RWPE1 (cell line): ENCODE measurements at regions of chr2 and their contacts with region 1.

Region 1: DNA sequence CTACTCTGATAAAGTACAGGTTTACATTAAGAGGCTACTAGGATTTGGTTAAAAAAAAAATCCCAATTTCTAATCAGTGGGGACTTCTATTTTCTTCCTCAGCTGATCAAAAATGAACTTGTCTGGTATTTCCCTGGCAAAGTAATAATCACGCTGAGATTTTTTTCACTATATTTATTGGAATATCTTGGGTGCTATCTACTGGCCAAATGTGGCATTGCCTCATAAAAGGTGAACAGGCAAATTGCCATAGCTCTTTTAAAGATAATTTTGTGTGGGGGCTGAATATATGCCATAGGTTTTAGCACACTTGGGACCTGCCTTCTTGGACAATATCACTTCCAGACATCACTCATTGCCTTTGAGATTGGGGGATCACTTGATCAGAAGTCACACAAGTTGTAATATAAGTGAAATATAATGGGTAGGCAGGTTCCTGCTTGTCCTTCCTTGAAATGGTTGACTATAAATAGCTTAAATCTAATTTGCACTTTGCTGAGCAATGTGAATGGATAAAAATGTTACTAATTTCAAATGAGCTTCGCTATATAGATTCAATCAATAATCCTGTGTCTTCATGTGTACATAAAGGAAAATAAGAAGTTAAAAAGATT is 7.0 kb upstream of the NXPH2 start:
- DNase-seq: peak; percentile 23
- H3K27ac ChIP-seq: no peak overlapping the region
- CTCF ChIP-seq: peak; percentile 80

Region 2: GRCh38 chr2:138658187-138658894 is 128.8 kb before region 1 on chr2:
- CTCF ChIA-PET with region 1: interaction called, 10 read pairs
- POLR2A ChIA-PET with region 1: no interaction called
- DNase-seq: no peak
- H3K27ac ChIP-seq: no peak overlapping the region
- CTCF ChIP-seq: no peak

Region 3: GRCh38 chr2:138775736-138776135 is 11.4 kb before region 1 on chr2:
- CTCF ChIA-PET with region 1: no interaction called
- POLR2A ChIA-PET with region 1: no interaction called
- DNase-seq: no peak
- H3K27ac ChIP-seq: no peak overlapping the region
- CTCF ChIP-seq: no peak

Region 4: DNA sequence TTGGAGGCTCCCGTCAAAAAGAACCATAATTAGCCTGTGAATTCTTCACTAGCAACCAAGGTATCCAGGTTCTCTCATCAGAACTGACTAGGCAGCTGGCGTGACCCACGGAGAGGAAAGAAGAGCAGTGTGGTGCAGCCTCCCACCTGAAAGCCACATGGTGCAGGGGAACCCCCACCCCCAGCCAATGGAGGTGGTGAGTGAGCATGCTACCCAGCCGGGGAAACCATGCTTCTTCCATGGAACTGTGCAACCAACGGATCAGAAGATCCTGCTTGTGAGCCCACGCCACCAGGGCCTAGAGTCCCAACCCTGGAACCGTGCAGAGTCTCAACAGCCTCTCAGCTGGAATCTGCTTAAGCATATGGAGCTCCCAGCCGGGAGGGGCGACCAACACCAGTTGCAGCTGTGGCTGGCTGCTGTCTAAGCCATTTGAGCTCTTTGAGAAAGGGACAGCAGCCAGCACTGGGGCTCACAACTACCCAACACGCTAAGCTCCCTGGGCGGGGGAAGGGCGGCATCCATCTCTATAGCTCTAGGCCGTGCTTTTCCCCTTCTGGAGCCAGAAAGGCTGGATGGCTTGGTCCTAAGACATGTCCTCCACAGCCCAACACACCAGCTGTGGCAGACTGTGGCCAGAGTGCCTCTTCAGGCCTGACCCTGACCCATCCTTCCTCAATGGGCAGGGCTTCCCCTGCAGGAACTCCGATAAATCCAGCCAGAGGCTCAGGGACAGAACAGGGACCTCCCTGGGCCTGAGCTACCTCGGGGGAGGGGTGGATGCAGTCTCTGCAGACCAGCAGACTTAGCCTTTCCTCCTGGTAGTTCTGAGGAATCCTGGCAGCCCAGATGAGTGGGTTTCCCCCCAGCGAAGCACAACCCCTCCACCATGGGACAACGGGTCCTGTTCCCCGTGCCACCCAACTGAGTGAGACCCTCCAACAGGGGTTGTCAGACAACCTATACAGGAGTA is 144.4 kb after region 1 on chr2:
- CTCF ChIA-PET with region 1: no interaction called
- POLR2A ChIA-PET with region 1: no interaction called
- DNase-seq: no peak
- H3K27ac ChIP-seq: no peak overlapping the region
- CTCF ChIP-seq: no peak

Region 5: GRCh38 chr2:139031722-139032121 is 244.6 kb after region 1 on chr2:
- CTCF ChIA-PET with region 1: no interaction called
- POLR2A ChIA-PET with region 1: no interaction called
- DNase-seq: peak; percentile 41
- H3K27ac ChIP-seq: no peak overlapping the region
- CTCF ChIP-seq: no peak